CD4-positive, alpha-beta T cell (primary cell): ENCODE measurements at regions of chr6 and their contacts with region 1.

Region 1: DNA sequence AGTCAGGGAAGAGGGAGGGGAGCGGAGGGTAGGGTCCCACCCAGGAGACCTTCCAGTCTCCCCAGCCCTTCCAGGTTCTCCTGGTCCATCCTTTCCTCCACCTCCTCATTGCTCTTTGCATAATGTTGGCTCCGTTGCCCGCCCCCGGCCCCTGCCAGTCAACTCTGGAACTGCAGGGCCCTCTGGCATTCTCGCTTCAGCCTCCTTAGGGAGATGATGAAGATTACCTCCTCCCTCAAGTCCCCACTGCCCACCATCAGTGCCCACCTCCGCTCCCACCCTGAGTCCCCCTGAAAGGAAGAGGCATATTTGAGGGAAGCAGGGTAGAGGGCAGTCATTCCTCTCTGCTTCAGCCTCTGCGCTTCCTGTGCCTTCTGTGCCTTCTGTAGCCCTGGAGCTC is 8.5 kb downstream of the TMEM63B start:
- DNase-seq: no peak
- ATAC-seq: no peak
- H3K4me3 ChIP-seq: no peak overlapping the region
- H3K4me3 Mint-ChIP-seq: no peak overlapping the region
- H3K27ac ChIP-seq: no peak overlapping the region
- H3K27ac Mint-ChIP-seq: no peak overlapping the region
- H3K4me1 ChIP-seq: peaks cover 9% of the 10 kb centered on the region
- H3K4me1 Mint-ChIP-seq: peaks cover 11% of the 10 kb centered on the region
- H3K27me3 ChIP-seq: no peaks in the 10 kb centered on the region
- H3K27me3 Mint-ChIP-seq: no peaks in the 10 kb centered on the region
- CTCF ChIP-seq: no peak

Region 2: GRCh38 chr6:43310624-43311023 is 825.3 kb before region 1 on chr6:
- CTCF ChIA-PET with region 1: no interaction called
- POLR2A ChIA-PET with region 1: no interaction called
- intact Hi-C with region 1: no loop called
- DNase-seq: no peak
- ATAC-seq: no peak
- H3K4me3 ChIP-seq: no peak overlapping the region
- H3K4me3 Mint-ChIP-seq: no peak overlapping the region
- H3K27ac ChIP-seq: no peak overlapping the region
- H3K27ac Mint-ChIP-seq: no peak overlapping the region
- H3K4me1 ChIP-seq: peaks cover 19% of the 10 kb centered on the region
- H3K4me1 Mint-ChIP-seq: peaks cover 7% of the 10 kb centered on the region
- H3K27me3 ChIP-seq: no peaks in the 10 kb centered on the region
- H3K27me3 Mint-ChIP-seq: no peaks in the 10 kb centered on the region
- CTCF ChIP-seq: no peak

Region 3: GRCh38 chr6:43702534-43703440 is 433.1 kb before region 1 on chr6:
- CTCF ChIA-PET with region 1: no interaction called
- POLR2A ChIA-PET with region 1: no interaction called
- intact Hi-C with region 1: no loop called
- DNase-seq: peak in 2 of 14 experiments; percentile 54 to 64
- ATAC-seq: peak; percentile 56
- H3K4me3 ChIP-seq: no peak overlapping the region
- H3K4me3 Mint-ChIP-seq: no peak overlapping the region
- H3K27ac ChIP-seq: no peak overlapping the region
- H3K27ac Mint-ChIP-seq: no peak overlapping the region
- H3K4me1 ChIP-seq: peaks cover 5% of the 10 kb centered on the region
- H3K4me1 Mint-ChIP-seq: no peaks in the 10 kb centered on the region
- H3K27me3 ChIP-seq: peaks cover 0 to 10% of the 10 kb centered on the region in 2 experiments
- H3K27me3 Mint-ChIP-seq: peaks cover 62% of the 10 kb centered on the region
- CTCF ChIP-seq: no peak

Region 4: DNA sequence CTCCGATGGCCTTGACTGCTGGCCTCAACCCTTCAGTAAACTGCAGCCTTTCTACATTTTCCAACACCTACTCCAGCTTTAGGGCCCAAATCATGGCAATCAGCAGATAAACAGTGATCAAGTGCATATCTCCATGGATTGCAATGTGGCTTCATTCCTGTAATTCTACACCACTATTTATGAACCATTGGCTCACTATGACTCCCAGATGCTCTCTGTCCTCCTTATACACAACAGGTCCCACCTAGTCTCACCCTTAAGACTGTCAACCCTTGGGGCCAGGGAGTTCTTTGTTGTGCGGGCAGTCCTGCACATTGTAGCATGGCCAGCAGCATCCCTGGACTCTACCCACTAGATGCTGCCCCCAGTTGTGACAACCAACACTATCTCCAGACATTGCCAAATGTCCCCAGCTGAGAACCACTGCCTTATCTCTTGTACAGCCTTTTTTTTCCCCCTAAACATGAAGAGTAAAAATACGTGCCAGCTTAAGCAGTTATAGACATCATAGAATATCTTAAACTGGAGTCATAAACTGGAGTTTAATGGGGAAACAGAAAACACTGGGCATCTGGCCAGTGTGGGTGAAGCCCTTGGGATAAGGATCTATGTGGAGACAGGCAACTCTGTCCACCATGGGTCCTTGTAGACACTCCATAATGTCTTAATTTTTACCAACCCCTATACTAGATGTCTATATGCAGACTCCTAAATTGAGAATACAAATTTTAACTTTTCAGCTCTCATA is 29.7 kb before region 1 on chr6:
- CTCF ChIA-PET with region 1: no interaction called
- POLR2A ChIA-PET with region 1: no interaction called
- intact Hi-C with region 1: loop called in 1 of 2 experiments (anchors 1 kb)
- DNase-seq: no peak
- ATAC-seq: no peak
- H3K4me3 ChIP-seq: no peak overlapping the region
- H3K4me3 Mint-ChIP-seq: no peak overlapping the region
- H3K27ac ChIP-seq: no peak overlapping the region
- H3K27ac Mint-ChIP-seq: no peak overlapping the region
- H3K4me1 ChIP-seq: no peaks in the 10 kb centered on the region
- H3K4me1 Mint-ChIP-seq: peaks cover 24% of the 10 kb centered on the region
- H3K27me3 ChIP-seq: no peaks in the 10 kb centered on the region
- H3K27me3 Mint-ChIP-seq: no peaks in the 10 kb centered on the region
- CTCF ChIP-seq: no peak